Activated CD4-positive, alpha-beta memory T cell treated with anti-CD3 and anti-CD28 coated beads for 36 hours (primary cell): ENCODE measurements at regions of chr2 and their contacts with region 1.

Region 1: GRCh38 chr2:705971-706511 is 28.8 kb upstream of the TMEM18 start:
- DNase-seq: peak; percentile 73
- H3K4me3 Mint-ChIP-seq: no peak overlapping the region
- H3K27ac Mint-ChIP-seq: no peak overlapping the region
- H3K4me1 Mint-ChIP-seq: peaks cover 16% of the 10 kb centered on the region
- H3K27me3 Mint-ChIP-seq: peaks cover 23% of the 10 kb centered on the region

Region 2: GRCh38 chr2:677056-677965 is 28.7 kb before region 1 on chr2 and contains the start of gene TMEM18:
- CTCF ChIA-PET with region 1: no interaction called
- POLR2A ChIA-PET with region 1: interaction called, 4 read pairs
- intact Hi-C with region 1: loop called (anchors 1 kb)
- DNase-seq: peak; percentile 93
- H3K4me3 Mint-ChIP-seq: peak within 1 kb of the TSS; percentile 95
- H3K27ac Mint-ChIP-seq: peak within 1 kb of the TSS; percentile 99
- H3K4me1 Mint-ChIP-seq: peaks cover 38% of the 10 kb centered on the region
- H3K27me3 Mint-ChIP-seq: no peaks in the 10 kb centered on the region
- total RNA-seq, gene TMEM18: 20.8 to 21.8 TPM

Region 3: DNA sequence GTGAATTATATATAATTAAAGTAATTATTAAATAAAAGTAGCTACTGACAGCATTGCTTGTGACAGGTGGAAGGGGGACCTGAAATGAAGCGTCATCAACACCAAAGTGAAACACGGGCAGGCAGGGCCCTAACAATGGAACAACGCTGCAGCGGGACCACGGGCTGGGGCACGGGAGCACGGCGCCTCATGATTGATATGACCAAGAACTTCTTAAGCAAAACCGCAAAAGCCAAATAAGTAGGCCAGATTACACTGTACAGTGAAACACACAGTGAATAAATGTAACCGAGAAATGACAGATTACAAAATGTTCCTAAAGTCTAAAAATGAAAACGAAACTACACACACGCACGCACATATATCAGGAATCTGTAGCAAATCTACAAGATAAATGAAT is 326.0 kb after region 1 on chr2:
- CTCF ChIA-PET with region 1: no interaction called
- POLR2A ChIA-PET with region 1: no interaction called
- intact Hi-C with region 1: loop called (anchors 10 kb)
- DNase-seq: peak; percentile 69
- H3K4me3 Mint-ChIP-seq: peak overlapping the region; percentile 56
- H3K27ac Mint-ChIP-seq: no peak overlapping the region
- H3K4me1 Mint-ChIP-seq: peaks cover 14% of the 10 kb centered on the region
- H3K27me3 Mint-ChIP-seq: no peaks in the 10 kb centered on the region